Dorsolateral prefrontal cortex (tissue), 120 donors: ENCODE measurements at regions of chr1 and their contacts with region 1.

Region 1: GRCh38 chr1:202122639-202123335 is at the start of gene GPR37L1:
- DNase-seq: peak in 9 of 10 donors; percentile 78 to 90 (median 86)
- H3K4me3 ChIP-seq: peak within 1 kb of the TSS; percentile 39 to 87 (median 64)
- H3K27ac ChIP-seq: peak within 1 kb of the TSS; percentile 68 to 99 (median 98)
- H3K27me3 ChIP-seq: no peaks in the 10 kb centered on the region
- CTCF ChIP-seq: peak; percentile 39 to 87 (median 75)
- total RNA-seq, gene GPR37L1: 26.2 to 167 (median 58.0) TPM

Region 2: GRCh38 chr1:202009326-202010179 is 113.2 kb before region 1 on chr1:
- intact Hi-C with region 1: loop called (anchors 1 to 5 kb)
- DNase-seq: peak; percentile 57 to 90 (median 78)
- H3K4me3 ChIP-seq: no peak overlapping the region
- H3K27ac ChIP-seq: peak overlapping the region in 4 of 59 donors; percentile 1 to 64 (median 33)
- H3K27me3 ChIP-seq: no peaks in the 10 kb centered on the region
- CTCF ChIP-seq: peak; percentile 73 to 97 (median 89)

Region 3: DNA sequence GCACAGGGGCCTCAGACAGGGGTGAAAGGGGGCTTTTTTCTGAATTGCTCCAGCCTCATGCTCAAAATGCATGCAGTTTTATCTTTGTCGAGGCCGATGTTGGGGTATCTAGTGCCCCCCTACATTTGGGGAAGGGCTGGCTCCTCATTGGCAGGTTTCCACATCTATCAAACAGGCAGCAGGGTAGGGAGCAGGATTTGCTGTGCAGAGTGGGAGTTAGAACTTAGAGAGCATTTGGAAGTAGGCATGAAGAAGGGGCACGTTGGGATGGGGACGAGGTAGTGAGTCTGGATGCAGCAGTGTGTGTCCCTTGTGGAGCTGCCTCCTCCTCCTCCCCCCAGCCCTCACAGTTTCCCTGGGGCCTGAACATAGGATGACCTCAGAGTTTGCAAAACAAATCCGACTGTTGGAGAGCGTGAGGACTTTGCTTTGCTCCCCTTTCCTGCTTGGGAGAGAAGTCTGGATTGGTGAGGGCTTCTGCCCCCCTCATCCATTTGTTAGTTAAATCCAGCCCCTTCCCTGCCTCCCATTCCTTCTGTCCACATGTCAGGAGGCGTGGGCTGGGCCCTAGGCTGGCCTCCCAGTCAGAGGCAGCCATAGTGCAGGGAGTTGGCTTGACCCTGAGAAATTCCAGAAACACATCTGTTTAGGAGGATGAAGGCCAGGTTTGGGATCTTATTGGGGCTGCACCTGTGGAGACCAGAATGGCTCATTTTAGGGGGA is 36.9 kb before region 1 on chr1:
- intact Hi-C with region 1: loop called in 1 of 2 experiments (anchors 5 kb)
- DNase-seq: peak in 9 of 10 donors; percentile 43 to 78 (median 67)
- H3K4me3 ChIP-seq: peak overlapping the region in 6 of 59 donors; percentile 2 to 35 (median 22)
- H3K27ac ChIP-seq: peak overlapping the region; percentile 79 to 99 (median 95)
- H3K27me3 ChIP-seq: no peaks in the 10 kb centered on the region
- CTCF ChIP-seq: peak in 1 of 56 donors; percentile 0

Region 4: GRCh38 chr1:202365092-202365815 is 242.5 kb after region 1 on chr1:
- intact Hi-C with region 1: no loop called
- DNase-seq: no peak
- H3K4me3 ChIP-seq: no peak overlapping the region
- H3K27ac ChIP-seq: peak overlapping the region in 28 of 59 donors; percentile 0 to 84 (median 36)
- H3K27me3 ChIP-seq: no peaks in the 10 kb centered on the region
- CTCF ChIP-seq: no peak

Region 5: DNA sequence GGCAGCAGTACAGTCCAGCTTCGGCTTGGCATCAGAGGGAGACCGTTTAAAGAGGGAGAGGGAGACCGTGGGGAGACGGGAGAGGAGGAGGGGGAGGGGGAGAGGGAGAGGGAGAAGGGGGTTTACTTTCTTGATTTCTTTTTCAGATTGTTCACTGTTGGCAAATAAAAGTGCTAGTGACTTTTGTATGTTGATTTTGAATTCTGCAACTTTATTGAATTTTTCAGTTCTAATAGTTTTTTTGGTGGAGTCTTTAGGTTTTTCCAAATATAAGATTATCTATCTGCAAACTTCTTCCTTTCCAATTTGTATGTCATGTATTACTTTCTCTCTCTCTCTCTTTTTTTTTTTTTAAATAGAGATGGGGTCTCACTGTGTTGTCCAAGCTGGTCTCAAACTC is 329.7 kb after region 1 on chr1:
- intact Hi-C with region 1: no loop called
- DNase-seq: no peak
- H3K4me3 ChIP-seq: no peak overlapping the region
- H3K27ac ChIP-seq: no peak overlapping the region
- H3K27me3 ChIP-seq: no peaks in the 10 kb centered on the region
- CTCF ChIP-seq: no peak